ENCODE measurements at regions of chr2 and their contacts with region 1.

Region 1: GRCh38 chr2:64873472-64873924 is 115.7 kb upstream of the SLC1A4 start:
- H3K4me3 ChIP-seq: no peak overlapping the region
- H3K27ac ChIP-seq: no peak overlapping the region
- H3K4me1 ChIP-seq: no peaks in the 10 kb centered on the region
- CTCF ChIP-seq: peak; percentile 91

Region 2: GRCh38 chr2:64594226-64594989 is 279.1 kb before region 1 on chr2:
- CTCF ChIA-PET with region 1: interaction called, 10 read pairs
- POLR2A ChIA-PET with region 1: no interaction called
- H3K4me3 ChIP-seq: no peak overlapping the region
- H3K27ac ChIP-seq: no peak overlapping the region
- H3K4me1 ChIP-seq: no peaks in the 10 kb centered on the region
- CTCF ChIP-seq: no peak

Region 3: DNA sequence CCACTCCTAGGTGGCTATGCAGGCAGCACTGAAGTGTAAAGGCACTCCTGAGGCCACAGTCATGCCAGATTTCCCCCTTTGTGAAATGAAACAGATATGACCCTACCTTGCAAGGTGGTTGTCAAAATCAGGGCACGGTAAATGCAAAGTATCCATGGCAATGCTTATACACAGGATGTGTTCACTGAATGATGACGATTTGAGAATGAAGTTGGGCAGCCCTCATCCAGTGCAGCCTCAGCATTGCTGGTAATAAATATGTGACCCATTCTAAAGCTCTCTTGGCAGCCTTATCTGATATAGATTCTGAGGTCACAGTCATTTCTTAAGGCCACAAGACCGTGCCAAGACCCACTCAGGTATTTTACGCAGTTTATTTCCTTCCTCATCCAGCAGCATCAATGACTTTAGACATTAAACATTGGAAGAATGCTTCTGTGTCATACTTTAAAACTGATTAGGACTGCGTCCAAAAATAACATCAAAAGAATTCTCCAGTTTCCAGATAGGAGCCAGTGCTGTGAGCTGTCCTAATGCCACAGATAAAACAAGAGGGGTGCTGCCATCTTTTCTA is 94.3 kb before region 1 on chr2:
- CTCF ChIA-PET with region 1: no interaction called
- POLR2A ChIA-PET with region 1: no interaction called
- H3K4me3 ChIP-seq: no peak overlapping the region
- H3K27ac ChIP-seq: no peak overlapping the region
- H3K4me1 ChIP-seq: 0 out of 2 replicates have a peak, but pooled peaks cover 2% of the 10 kb centered on the region
- CTCF ChIP-seq: no peak

Region 4: DNA sequence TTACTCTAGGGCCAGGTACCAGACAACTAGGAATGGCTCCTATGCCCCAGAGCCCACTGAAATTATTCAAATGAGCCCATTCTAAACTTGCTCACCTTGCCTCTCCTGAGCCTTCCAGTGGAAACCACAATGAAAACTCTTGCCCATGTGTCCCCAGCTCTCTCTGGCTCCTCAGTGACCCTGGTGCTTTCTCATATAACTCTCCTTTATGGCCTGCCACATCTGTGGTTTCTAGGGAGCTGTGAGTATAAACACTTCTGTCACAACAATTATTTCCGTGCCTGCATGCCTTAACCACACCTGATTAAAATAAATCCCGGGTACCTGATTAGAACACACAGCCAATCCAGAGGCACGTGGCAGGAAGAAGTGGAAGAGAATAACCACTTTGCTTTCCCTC is 891.9 kb after region 1 on chr2:
- CTCF ChIA-PET with region 1: no interaction called
- POLR2A ChIA-PET with region 1: no interaction called
- H3K4me3 ChIP-seq: no peak overlapping the region
- H3K27ac ChIP-seq: no peak overlapping the region
- H3K4me1 ChIP-seq: no peaks in the 10 kb centered on the region
- CTCF ChIP-seq: no peak